K562 (cell line): ENCODE measurements at regions of chr7 and their contacts with region 1.

Region 1: GRCh38 chr7:43750016-43750887 is 8.2 kb upstream of the BLVRA start:
- DNase-seq: peak in 2 of 4 experiments; percentile 71 to 76
- ATAC-seq: peak; percentile 80
- H3K4me3 ChIP-seq: no peak overlapping the region
- H3K27ac ChIP-seq: peak overlapping the region; percentile 28; the same call in 2 of the 3 replicates
- H3K4me1 ChIP-seq: peaks cover 19 to 28% of the 10 kb centered on the region in 2 experiments
- H3K27me3 ChIP-seq: no peaks in the 10 kb centered on the region
- CTCF ChIP-seq: no peak
- EP300 ChIP-seq: peak; percentile 55; the same call in 1 of the 2 replicates
- POLR2A ChIP-seq: no peak
- RAD21 ChIP-seq: no peak

Region 2: DNA sequence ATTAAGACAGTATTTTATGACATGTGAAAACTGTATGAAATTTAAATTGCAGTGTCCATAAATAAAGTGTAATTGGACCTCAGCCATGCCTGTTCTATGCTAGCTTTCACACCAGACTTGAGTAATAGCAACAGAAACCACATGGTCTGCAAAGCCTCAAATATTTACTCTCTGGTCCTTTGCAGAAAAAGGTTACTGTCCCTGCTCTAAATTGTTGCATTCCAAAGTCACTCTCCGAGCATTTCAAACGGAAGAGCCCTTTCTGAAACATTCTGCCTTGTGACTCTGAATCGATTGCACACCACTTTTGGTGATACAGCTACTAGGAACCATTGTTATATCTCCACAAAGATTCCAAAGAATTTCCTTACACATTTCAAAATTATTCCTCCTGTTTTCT is 248.4 kb before region 1 on chr7:
- CTCF ChIA-PET with region 1: no interaction called
- POLR2A ChIA-PET with region 1: no interaction called
- in situ Hi-C with region 1: no loop called
- intact Hi-C with region 1: no loop called
- DNase-seq: no peak
- ATAC-seq: no peak
- H3K4me3 ChIP-seq: no peak overlapping the region
- H3K27ac ChIP-seq: no peak overlapping the region
- H3K4me1 ChIP-seq: no peaks in the 10 kb centered on the region
- H3K27me3 ChIP-seq: peaks cover 32 to 42% of the 10 kb centered on the region in 2 experiments
- CTCF ChIP-seq: no peak
- EP300 ChIP-seq: no peak
- POLR2A ChIP-seq: no peak
- RAD21 ChIP-seq: no peak

Region 3: DNA sequence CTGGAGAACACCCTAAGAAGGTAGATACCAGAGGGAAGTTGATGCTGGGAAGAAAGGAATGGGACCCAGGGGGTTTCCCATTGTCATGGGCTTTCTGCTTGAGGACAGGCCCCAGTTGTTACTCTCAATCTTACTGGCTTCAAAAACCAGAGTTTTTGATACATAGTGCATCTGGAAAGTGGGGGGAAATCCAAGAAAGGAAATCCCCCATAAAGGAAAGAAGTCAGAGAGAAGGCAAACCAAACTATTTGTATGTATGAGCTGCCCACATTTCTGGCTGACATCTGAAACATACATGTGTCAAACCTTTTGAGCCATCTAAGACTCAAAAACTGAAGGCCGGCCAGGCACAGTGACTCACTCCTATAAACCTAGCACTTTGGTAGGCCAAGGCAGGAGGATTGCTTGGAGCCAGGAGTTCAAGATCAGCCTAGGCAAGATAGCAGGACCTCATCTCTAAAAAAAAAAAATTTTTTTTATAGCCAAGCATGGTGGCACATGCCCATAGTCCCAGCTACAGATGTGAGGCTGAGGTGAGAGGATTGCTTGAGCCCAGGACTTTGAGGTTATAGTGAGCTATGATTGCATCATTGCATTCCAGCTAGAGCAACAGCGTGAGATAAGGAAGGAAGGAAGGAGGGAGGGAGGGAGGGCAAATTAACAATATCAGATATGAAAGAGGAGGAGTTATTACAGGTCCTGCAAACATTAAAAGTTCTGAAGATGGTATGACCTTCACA is 14.3 kb before region 1 on chr7:
- CTCF ChIA-PET with region 1: no interaction called
- POLR2A ChIA-PET with region 1: interaction called, 9 read pairs
- in situ Hi-C with region 1: no loop called
- intact Hi-C with region 1: loop called (anchors 2 kb)
- DNase-seq: peak in 1 of 4 experiments; percentile 81
- ATAC-seq: peak; percentile 77
- H3K4me3 ChIP-seq: no peak overlapping the region
- H3K27ac ChIP-seq: peak overlapping the region; percentile 76
- H3K4me1 ChIP-seq: peaks cover 12 to 24% of the 10 kb centered on the region in 2 experiments
- H3K27me3 ChIP-seq: no peaks in the 10 kb centered on the region
- CTCF ChIP-seq: no peak
- EP300 ChIP-seq: peak; percentile 70
- POLR2A ChIP-seq: no peak
- RAD21 ChIP-seq: no peak